ENCODE measurements at regions of chr2 and their contacts with region 1.

Region 1: GRCh38 chr2:216713691-216714336 is 18.5 kb upstream of the IGFBP5 start:
- DNase-seq: peak; percentile 85 to 86
- ATAC-seq: peak; percentile 52
- H3K4me3 ChIP-seq: no peak overlapping the region
- H3K27ac ChIP-seq: peak overlapping the region in 1 of 2 donors; percentile 58
- H3K4me1 ChIP-seq: peaks cover 0 to 5% of the 10 kb centered on the region in 2 donors
- H3K27me3 ChIP-seq: no peaks in the 10 kb centered on the region

Region 2: DNA sequence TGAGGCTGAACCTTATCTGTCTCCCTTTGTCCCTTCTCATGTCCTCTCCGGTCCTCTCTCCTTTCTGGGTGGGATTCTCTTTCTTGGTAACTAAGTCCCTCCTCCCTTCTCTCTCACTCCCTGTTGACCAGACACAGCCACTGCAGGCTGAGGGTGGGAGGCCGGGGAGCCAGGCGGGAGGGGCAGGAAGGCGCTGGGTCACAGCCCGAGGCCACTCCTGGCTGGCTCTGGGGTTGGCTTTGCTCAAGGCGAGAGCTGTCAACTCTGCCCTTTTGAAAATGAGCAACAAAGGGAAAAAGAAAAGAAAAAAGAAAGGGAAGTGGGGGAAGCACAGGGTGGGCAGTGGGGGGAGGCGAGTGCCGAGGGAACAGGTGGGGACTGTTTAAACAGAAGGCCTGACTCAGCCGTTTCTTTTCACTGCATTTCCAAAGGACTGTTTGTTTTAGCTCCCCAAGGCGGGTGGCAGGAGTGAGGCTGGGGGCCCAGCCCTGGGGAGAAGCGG is 52.0 kb after region 1 on chr2:
- intact Hi-C with region 1: loop called in 1 of 2 experiments (anchors 5 kb)
- DNase-seq: peak in 1 of 2 donors; percentile 77
- ATAC-seq: no peak
- H3K4me3 ChIP-seq: no peak overlapping the region
- H3K27ac ChIP-seq: no peak overlapping the region
- H3K4me1 ChIP-seq: no peaks in the 10 kb centered on the region
- H3K27me3 ChIP-seq: no peaks in the 10 kb centered on the region

Region 3: GRCh38 chr2:216777650-216778273 is 63.9 kb after region 1 on chr2:
- intact Hi-C with region 1: loop called in 1 of 2 experiments (anchors 5 kb)
- DNase-seq: no peak
- ATAC-seq: no peak
- H3K4me3 ChIP-seq: no peak overlapping the region
- H3K27ac ChIP-seq: no peak overlapping the region
- H3K4me1 ChIP-seq: peaks cover 0 to 1% of the 10 kb centered on the region in 2 donors
- H3K27me3 ChIP-seq: no peaks in the 10 kb centered on the region

Measured in aorta (tissue), 5 donors.